ENCODE measurements at regions of chr4 and their contacts with region 1.

Region 1: DNA sequence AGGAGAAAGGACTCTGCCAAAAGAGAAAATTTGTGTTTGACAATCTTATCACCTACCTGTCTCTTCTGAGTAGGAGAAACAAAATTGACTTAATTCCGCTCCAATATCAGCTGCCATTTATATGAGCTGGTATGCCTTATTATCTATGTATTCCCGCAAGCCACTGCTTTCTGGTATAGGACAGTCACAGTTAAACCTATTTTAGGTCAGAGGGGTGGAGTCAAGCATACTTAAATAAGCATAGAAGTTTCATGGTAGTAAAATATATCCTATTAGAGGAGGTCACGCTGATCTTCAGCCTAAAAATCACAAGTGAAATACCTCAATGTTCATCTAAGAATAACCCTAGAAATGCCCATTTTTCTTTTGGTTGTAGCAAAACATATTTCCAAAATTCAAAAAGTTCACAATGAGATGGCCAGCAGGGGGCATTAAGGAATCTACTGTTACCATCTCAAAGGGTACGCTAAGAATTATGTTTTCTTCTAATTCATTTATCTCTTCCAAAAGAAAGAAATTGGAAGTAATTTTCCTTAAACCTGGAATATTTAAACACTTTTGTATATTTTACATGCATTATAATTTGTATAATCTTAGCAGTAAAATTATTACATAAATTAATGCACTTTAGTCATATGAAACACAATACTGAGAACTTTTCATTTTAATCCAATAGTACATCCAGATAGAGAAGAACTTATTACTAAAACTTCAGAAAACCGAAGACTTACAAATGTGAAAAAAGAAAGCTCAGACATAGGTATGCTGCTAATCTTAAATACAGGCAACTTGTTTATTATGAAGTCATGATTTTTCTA is 10.5 kb downstream of the PPAT start:
- DNase-seq: no peak
- ATAC-seq: no peak
- H3K4me3 ChIP-seq: no peak overlapping the region
- H3K27ac ChIP-seq: no peak overlapping the region
- H3K4me1 ChIP-seq: no peaks in the 10 kb centered on the region
- H3K27me3 ChIP-seq: no peaks in the 10 kb centered on the region

Region 2: DNA sequence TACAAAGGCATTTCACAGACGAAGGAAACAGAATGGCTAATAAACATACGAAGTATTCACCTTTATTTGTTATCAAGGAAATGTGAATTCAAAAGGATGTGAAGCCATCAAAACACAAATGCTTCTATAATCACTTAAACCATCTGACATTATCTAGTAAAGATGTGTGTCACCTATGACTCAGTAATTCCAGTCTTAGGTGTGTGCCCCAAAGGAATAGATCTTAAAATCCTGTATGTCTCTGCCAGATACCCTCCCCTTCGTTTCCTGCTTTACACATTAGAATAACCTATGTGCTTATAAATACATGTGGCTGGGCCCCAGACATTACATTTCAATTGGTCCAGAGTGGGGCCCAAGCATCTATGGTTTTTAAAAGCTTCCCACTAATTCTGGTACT is 517.9 kb before region 1 on chr4:
- intact Hi-C with region 1: no loop called
- DNase-seq: no peak
- ATAC-seq: no peak
- H3K4me3 ChIP-seq: no peak overlapping the region
- H3K27ac ChIP-seq: no peak overlapping the region
- H3K4me1 ChIP-seq: no peaks in the 10 kb centered on the region
- H3K27me3 ChIP-seq: no peaks in the 10 kb centered on the region

Region 3: GRCh38 chr4:56289934-56290333 is 135.0 kb before region 1 on chr4:
- intact Hi-C with region 1: no loop called
- DNase-seq: no peak
- ATAC-seq: no peak
- H3K4me3 ChIP-seq: no peak overlapping the region
- H3K27ac ChIP-seq: no peak overlapping the region
- H3K4me1 ChIP-seq: peaks cover 0 to 2% of the 10 kb centered on the region in 2 donors
- H3K27me3 ChIP-seq: no peaks in the 10 kb centered on the region

Region 4: DNA sequence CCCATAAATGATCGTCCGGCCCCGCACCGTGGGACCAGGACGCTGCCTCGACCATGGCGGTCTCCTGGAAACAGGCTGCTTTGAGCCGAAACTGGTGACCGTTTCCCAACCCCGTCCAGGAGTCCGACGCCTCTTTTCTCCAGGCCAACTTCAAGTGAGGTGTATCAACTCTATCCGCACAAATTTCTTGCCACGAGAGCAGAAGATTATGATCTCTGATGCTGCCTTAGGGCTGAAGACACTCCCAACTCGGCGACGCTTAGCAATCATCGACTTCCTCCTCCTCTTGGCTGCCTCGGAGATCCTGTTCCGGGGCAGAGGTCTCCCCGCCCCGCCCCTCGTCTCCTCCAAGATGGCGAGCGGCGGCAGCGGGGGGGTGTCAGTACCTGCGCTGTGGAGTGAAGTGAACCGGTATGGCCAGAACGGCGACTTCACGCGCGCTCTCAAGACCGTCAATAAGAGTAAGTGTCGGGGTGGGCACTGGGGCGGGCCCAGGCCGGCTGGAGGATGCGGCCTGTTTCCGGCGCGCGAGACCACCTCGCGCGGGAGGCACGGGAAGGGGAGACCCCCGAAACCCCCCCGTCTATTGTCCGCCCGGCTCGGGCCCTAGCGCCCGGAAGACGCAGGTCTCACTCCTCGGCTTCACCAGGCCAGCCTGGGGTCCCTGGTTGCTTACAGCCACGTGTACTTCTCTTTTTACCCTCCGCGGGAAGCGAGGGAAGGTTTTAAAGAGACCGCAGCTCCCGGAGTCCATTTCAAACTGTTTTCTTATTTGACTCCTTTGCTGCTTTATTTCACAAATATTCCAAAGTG is 42.6 kb after region 1 on chr4 and contains the start of gene SRP72:
- intact Hi-C with region 1: loop called in 1 of 2 experiments (anchors 5 kb)
- DNase-seq: peak; percentile 92 to 95
- ATAC-seq: peak; percentile 97
- H3K4me3 ChIP-seq: peak within 1 kb of the TSS; percentile 91 to 96
- H3K27ac ChIP-seq: peak within 1 kb of the TSS; percentile 9 to 50
- H3K4me1 ChIP-seq: peaks cover 0 to 4% of the 10 kb centered on the region in 2 donors
- H3K27me3 ChIP-seq: no peaks in the 10 kb centered on the region
- total RNA-seq, gene SRP72: 84.6 to 88.1 TPM

Region 5: GRCh38 chr4:56544573-56545131 is 119.7 kb after region 1 on chr4:
- intact Hi-C with region 1: loop called (anchors 2 to 10 kb)
- DNase-seq: peak; percentile 83 to 96
- ATAC-seq: peak; percentile 98
- H3K4me3 ChIP-seq: no peak overlapping the region
- H3K27ac ChIP-seq: no peak overlapping the region
- H3K4me1 ChIP-seq: no peaks in the 10 kb centered on the region
- H3K27me3 ChIP-seq: no peaks in the 10 kb centered on the region

Region 6: DNA sequence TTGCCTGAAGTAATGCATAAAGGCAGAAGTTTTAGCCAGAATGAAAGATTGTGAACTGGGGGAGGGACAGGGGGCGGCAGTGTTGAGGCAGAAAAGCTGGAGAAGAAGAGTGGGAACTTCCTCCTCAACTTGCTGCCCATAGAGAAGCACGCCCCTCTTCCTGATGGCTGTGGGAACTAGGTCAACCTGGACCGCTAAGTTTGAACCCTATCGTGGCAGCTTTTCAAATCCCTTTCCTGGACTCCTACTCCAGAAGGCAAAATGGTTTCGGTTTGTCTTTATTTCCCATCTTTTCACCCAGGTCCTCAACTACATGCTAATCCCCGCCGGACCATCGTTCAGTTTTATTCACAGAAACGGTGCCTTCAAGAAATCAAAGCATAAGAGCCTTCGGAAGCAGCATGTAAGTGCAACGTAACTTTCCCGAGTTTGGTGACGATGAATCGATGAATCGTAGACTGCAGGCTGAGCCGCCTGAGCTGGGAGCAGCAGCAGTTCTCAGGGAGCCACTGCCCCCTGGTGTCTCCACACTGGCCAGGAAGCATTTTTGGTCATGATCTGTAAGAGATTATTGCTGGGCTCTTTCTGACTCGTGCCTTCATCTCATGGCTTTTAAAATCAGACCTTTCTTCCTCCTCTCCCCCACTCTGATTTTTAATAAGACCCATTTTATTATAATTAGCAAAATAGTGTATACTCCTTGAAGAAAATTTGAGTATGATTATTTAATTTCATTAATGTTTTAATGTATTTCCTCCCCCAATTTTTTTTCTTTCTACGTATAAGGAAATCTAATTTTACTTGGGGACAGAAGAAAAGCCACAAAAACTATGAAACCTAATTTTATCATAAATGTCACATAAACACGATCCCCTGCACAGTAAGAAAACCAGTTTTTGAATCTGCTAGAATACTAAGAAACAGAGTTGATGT is 375.2 kb after region 1 on chr4:
- intact Hi-C with region 1: loop called (anchors 10 kb)
- DNase-seq: peak; percentile 88 to 92
- ATAC-seq: peak; percentile 95
- H3K4me3 ChIP-seq: peak overlapping the region; percentile 73 to 91
- H3K27ac ChIP-seq: peak overlapping the region in 1 of 2 donors; percentile 84
- H3K4me1 ChIP-seq: no peaks in the 10 kb centered on the region
- H3K27me3 ChIP-seq: no peaks in the 10 kb centered on the region

Region 7: GRCh38 chr4:56828784-56829535 is 404.1 kb after region 1 on chr4:
- intact Hi-C with region 1: loop called (anchors 10 kb)
- DNase-seq: no peak
- ATAC-seq: no peak
- H3K4me3 ChIP-seq: no peak overlapping the region
- H3K27ac ChIP-seq: no peak overlapping the region
- H3K4me1 ChIP-seq: no peaks in the 10 kb centered on the region
- H3K27me3 ChIP-seq: no peaks in the 10 kb centered on the region